CD14-positive monocyte (primary cell): ENCODE measurements at regions of chr15 and their contacts with region 1.

Region 1: GRCh38 chr15:99565299-99566156 is at the start of gene MEF2A:
- DNase-seq: peak; percentile 91 to 94 (median 93)
- H3K4me3 ChIP-seq: peak within 1 kb of the TSS; percentile 85 to 98 (median 90)
- H3K4me3 Mint-ChIP-seq: peak within 1 kb of the TSS; percentile 100
- H3K27ac ChIP-seq: peak within 1 kb of the TSS; percentile 99 to 100
- H3K27ac Mint-ChIP-seq: peak within 1 kb of the TSS; percentile 99 to 100 (median 99)
- H3K4me1 ChIP-seq: peaks cover 34 to 56% of the 10 kb centered on the region in 2 donors
- H3K4me1 Mint-ChIP-seq: peaks cover 55% of the 10 kb centered on the region
- H3K27me3 ChIP-seq: no peaks in the 10 kb centered on the region
- H3K27me3 Mint-ChIP-seq: peaks cover 0 to 2% (median 0%) of the 10 kb centered on the region in 3 donors
- CTCF ChIP-seq: no peak
- polyA plus RNA-seq, gene MEF2A: 20.3 to 61.8 (median 33.5) TPM

Region 2: DNA sequence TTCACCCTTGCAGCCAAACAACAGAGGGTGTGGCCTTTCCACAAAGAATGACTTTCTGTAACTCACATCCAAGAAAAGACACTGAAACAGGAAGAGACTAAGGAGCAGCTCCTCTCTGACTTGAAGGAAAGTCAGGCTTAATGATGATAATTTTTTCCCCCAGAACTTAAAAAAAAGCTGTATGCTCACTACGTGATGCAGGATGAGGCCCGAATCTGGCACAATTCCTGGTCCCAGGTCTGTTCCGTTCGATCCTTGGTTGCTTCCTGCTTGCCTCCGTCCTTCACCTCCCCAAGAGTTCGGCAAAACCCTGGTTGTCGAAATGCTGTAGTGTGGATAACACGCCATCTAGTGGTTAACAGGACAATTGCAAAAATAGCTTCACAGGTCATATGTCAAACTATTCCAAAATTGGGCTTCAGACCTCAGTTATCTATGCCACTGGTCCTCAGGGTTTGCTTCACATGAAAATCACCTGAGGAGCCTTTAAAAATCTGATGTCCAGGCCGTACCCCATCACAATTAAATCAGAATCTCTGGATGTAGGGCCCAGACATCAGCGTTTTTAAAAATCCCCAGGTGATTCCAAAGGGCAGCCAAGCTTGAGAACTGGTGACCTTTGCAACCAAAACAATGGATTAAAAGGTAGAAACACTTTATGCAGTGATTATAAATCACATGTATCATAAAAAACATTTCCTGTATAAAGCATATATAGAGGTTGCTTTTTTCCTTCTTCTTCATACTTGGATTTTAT is 488.8 kb before region 1 on chr15:
- intact Hi-C with region 1: no loop called
- DNase-seq: peak; percentile 42 to 62 (median 62)
- H3K4me3 ChIP-seq: peak overlapping the region; percentile 23 to 71 (median 64)
- H3K4me3 Mint-ChIP-seq: peak overlapping the region; percentile 78 to 95
- H3K27ac ChIP-seq: no peak overlapping the region
- H3K27ac Mint-ChIP-seq: peak overlapping the region in 3 of 7 donors; percentile 65 to 70 (median 66)
- H3K4me1 ChIP-seq: peaks cover 0 to 4% of the 10 kb centered on the region in 2 donors
- H3K4me1 Mint-ChIP-seq: peaks cover 3% of the 10 kb centered on the region
- H3K27me3 ChIP-seq: no peaks in the 10 kb centered on the region
- H3K27me3 Mint-ChIP-seq: peaks cover 4 to 9% (median 4%) of the 10 kb centered on the region in 3 donors
- CTCF ChIP-seq: peak; percentile 84

Region 3: GRCh38 chr15:99250494-99251435 is 314.8 kb before region 1 on chr15:
- intact Hi-C with region 1: loop called in 1 of 2 experiments (anchors 10 kb)
- DNase-seq: peak; percentile 98 to 100 (median 98)
- H3K4me3 ChIP-seq: peak overlapping the region; percentile 67 to 98 (median 95)
- H3K4me3 Mint-ChIP-seq: peak overlapping the region; percentile 87 to 92
- H3K27ac ChIP-seq: peak overlapping the region; percentile 78 to 90
- H3K27ac Mint-ChIP-seq: peak overlapping the region; percentile 85 to 95 (median 90)
- H3K4me1 ChIP-seq: peaks cover 28 to 38% of the 10 kb centered on the region in 2 donors
- H3K4me1 Mint-ChIP-seq: peaks cover 27% of the 10 kb centered on the region
- H3K27me3 ChIP-seq: no peaks in the 10 kb centered on the region
- H3K27me3 Mint-ChIP-seq: no peaks in the 10 kb centered on the region
- CTCF ChIP-seq: no peak

Region 4: GRCh38 chr15:99452774-99453636 is 112.5 kb before region 1 on chr15:
- intact Hi-C with region 1: loop called in 1 of 2 experiments (anchors 10 kb)
- DNase-seq: peak; percentile 90 to 97 (median 93)
- H3K4me3 ChIP-seq: peak overlapping the region in 1 of 3 experiments; percentile 51
- H3K4me3 Mint-ChIP-seq: peak overlapping the region; percentile 37 to 73
- H3K27ac ChIP-seq: peak overlapping the region; percentile 82 to 90
- H3K27ac Mint-ChIP-seq: peak overlapping the region; percentile 81 to 92 (median 90)
- H3K4me1 ChIP-seq: peaks cover 57 to 58% of the 10 kb centered on the region in 2 donors
- H3K4me1 Mint-ChIP-seq: peaks cover 59% of the 10 kb centered on the region
- H3K27me3 ChIP-seq: no peaks in the 10 kb centered on the region
- H3K27me3 Mint-ChIP-seq: peaks cover 2 to 7% (median 3%) of the 10 kb centered on the region in 3 donors
- CTCF ChIP-seq: no peak

Region 5: DNA sequence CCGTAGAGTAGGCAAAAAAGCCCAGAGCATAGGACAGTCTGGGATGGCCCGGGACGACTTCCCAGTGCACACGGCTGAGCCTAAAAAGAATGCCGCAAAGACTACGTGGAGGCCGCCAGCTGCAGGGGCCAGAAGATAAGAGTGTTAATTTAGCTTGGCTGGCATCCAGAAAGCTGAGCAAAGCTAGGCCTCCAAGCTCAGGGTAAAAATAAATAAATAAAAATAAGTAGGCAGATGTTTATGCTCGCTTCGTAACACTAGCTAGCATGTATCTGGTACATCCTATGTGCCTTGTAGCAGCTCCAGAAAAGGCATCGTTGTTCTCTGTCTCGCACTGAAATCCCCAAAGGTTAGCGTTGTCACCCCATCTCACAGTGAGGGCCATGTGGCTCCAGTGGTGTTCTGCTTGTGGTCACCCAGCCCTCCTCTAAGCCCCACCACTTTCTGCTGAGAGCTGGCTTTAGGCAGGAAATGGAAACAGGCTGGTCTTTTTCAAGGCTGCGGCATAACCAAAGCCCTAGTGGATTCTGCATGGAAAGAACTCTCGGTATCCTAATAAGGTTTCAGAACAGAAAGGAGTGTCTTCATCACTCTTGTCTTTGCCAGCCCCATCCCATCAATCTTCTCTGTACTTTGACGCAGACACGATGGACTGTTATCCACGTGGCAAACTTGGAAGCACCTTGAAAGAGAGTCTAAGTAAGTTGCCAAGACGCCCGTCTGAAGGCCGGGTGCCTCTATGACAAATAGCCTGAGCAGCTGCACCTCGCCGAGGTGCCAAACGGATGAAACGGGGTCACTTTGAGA is 57.8 kb before region 1 on chr15:
- intact Hi-C with region 1: loop called (anchors 5 kb)
- DNase-seq: no peak
- H3K4me3 ChIP-seq: peak overlapping the region in 1 of 3 experiments; percentile 33
- H3K4me3 Mint-ChIP-seq: peak overlapping the region; percentile 61 to 81
- H3K27ac ChIP-seq: peak overlapping the region in 1 of 2 donors; percentile 38
- H3K27ac Mint-ChIP-seq: peak overlapping the region; percentile 57 to 97 (median 74)
- H3K4me1 ChIP-seq: peaks cover 87 to 97% of the 10 kb centered on the region in 2 donors
- H3K4me1 Mint-ChIP-seq: peaks cover 95% of the 10 kb centered on the region
- H3K27me3 ChIP-seq: no peaks in the 10 kb centered on the region
- H3K27me3 Mint-ChIP-seq: peaks cover 0 to 6% (median 0%) of the 10 kb centered on the region in 3 donors
- CTCF ChIP-seq: no peak

Region 6: GRCh38 chr15:99631255-99631654 is 65.7 kb after region 1 on chr15:
- intact Hi-C with region 1: loop called in 1 of 2 experiments (anchors 5 kb)
- DNase-seq: peak; percentile 77 to 88 (median 86)
- H3K4me3 ChIP-seq: peak overlapping the region in 1 of 3 experiments; percentile 33
- H3K4me3 Mint-ChIP-seq: peak overlapping the region in 1 of 2 donors; percentile 81
- H3K27ac ChIP-seq: peak overlapping the region; percentile 66 to 97
- H3K27ac Mint-ChIP-seq: peak overlapping the region; percentile 92 to 98 (median 96)
- H3K4me1 ChIP-seq: peaks cover 29 to 53% of the 10 kb centered on the region in 2 donors
- H3K4me1 Mint-ChIP-seq: peaks cover 55% of the 10 kb centered on the region
- H3K27me3 ChIP-seq: no peaks in the 10 kb centered on the region
- H3K27me3 Mint-ChIP-seq: no peaks in the 10 kb centered on the region
- CTCF ChIP-seq: no peak

Region 7: DNA sequence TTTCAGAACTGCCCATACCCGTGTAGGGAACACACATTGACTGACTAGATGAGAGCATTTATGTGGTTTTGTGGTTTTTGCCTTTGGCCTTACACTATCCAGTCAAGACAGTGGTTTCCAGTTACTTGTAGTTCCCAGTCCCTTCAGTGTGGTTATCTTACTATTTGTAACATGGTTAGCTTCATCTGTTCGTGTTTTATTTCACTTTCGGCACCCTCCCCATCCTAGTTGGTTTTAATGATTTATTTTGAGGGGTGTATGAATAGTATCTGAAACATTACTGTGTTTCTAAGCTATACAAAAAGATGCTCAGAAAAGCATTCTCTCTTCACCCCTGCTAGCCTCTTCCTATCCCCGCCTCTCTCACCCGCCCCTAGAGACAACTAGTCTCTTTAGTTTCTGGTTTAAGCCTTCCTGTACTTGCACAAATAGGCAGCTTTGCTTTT is 153.6 kb after region 1 on chr15:
- intact Hi-C with region 1: no loop called
- DNase-seq: no peak
- H3K4me3 ChIP-seq: no peak overlapping the region
- H3K4me3 Mint-ChIP-seq: no peak overlapping the region
- H3K27ac ChIP-seq: no peak overlapping the region
- H3K27ac Mint-ChIP-seq: no peak overlapping the region
- H3K4me1 ChIP-seq: no peaks in the 10 kb centered on the region
- H3K4me1 Mint-ChIP-seq: peaks cover 20% of the 10 kb centered on the region
- H3K27me3 ChIP-seq: no peaks in the 10 kb centered on the region
- H3K27me3 Mint-ChIP-seq: peaks cover 3 to 7% (median 4%) of the 10 kb centered on the region in 3 donors
- CTCF ChIP-seq: no peak